Left cardiac atrium (tissue), 4 donors: ENCODE measurements at regions of chr10 and their contacts with region 1.

Region 1: GRCh38 chr10:4849555-4850242 is 23.7 kb downstream of the AKR1E2 start:
- DNase-seq: peak; percentile 92
- ATAC-seq: peak; percentile 88 to 92

Region 2: DNA sequence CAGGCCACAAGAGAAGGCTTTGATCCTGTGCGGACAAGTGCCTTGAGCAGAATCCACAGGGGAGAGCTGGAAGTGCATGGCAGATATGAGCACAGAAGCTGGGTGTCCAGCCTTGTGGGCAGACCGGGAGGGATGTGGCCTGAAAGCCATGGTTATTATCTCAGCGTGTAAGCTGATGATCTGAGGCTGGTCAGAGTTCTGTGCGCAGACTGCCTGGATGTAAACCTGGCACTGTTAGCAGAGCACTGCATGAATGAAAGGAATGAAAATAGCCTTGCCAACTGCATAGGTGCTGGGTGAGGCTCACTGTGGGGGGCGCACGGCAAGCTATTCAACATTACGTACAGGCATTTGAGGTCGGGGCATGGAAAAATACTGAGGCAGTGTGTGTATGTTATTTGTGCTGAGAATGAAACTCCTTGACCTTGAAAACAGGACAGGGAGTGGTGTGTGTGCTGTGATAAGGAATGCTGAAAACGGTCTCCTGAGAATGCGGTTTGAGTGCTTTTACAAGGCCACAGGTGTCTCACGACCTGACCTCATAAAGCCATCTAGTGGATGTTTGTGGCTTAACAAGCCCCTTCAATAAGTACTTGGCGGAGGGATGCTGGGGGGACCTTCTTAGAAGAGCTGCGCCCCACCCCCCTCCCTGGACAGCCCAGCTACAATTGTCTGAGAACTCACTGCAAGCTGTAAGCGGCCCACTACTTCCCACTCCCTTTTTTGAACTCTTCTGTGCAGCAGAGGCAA is 132.2 kb after region 1 on chr10:
- intact Hi-C with region 1: loop called in 1 of 2 experiments (anchors 10 kb)
- DNase-seq: peak; percentile 33
- ATAC-seq: peak; percentile 25 to 64

Region 3: GRCh38 chr10:5094265-5095205 is 244.8 kb after region 1 on chr10 and contains the start of gene AKR1C3:
- intact Hi-C with region 1: loop called (anchors 2 to 5 kb)
- DNase-seq: no peak
- ATAC-seq: peak; percentile 93
- total RNA-seq, gene AKR1C3: 60.2 to 91.3 TPM

Region 4: DNA sequence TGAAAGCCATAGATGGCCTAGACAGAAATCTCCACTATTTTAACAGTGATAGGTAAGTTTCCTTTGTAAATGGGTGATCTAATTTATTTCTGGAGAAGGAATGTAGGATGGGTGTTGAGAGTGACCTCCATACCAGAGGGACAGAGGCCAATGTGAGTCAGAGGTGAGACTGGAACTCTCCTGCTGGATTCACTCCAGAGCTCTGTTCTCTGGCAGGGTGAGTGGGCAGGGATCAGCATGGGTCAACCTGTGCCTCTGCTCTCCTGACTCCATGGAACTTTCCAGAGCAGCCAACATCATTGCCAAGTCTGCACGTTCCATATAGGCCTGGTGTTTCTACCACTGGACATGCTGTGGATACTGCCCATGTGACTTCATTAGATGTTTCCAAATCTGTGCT is 255.9 kb after region 1 on chr10:
- intact Hi-C with region 1: no loop called
- DNase-seq: no peak
- ATAC-seq: peak in 1 of 2 donors; percentile 55

Region 5: DNA sequence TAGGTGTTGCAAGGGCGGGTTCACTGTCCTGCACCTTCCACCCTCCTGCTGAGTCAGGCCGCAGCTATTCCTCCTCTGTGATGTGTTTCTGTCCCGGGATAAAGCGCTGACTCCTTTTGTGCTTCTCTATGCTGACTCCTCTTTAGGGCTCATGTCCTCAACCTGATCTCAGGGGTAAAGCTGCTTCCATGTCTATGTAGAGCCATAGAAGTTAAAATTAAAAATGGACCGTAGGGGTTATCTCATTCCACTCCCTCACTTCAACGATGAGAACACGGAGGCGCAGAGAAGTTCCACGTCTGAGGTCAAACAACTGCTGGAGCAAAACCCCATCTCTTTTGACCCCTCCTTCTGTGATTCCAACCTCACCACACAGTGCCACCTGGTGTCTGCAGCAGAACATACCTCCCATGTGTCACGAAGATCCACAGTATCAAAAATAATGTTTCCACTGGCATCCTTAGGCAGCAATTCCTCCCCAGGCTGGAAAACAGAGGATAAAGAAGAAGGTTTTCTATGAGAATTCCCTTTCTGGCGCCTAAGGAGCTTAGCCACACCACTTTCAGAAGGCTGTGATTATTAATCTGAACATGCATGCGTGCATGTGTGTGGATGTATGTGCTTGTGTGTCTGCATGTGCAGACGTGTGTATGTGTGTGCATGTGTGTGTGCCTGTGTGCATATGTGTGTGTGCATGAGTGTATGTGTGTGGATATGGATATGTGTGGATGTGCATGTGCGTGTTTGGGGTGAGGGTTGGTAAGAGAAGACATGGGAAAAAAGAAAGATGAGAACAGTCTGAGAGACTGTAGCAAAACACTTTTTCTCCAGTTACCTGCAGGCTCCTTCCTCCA is 433.8 kb after region 1 on chr10:
- intact Hi-C with region 1: loop called (anchors 1 to 10 kb)
- DNase-seq: peak; percentile 63
- ATAC-seq: peak; percentile 86 to 95

Region 6: GRCh38 chr10:5314840-5315239 is 465.1 kb after region 1 on chr10:
- intact Hi-C with region 1: no loop called
- DNase-seq: no peak
- ATAC-seq: no peak

Region 7: GRCh38 chr10:5381187-5381586 is 531.5 kb after region 1 on chr10:
- intact Hi-C with region 1: loop called in 1 of 2 experiments (anchors 5 kb)
- DNase-seq: no peak
- ATAC-seq: no peak

Region 8: DNA sequence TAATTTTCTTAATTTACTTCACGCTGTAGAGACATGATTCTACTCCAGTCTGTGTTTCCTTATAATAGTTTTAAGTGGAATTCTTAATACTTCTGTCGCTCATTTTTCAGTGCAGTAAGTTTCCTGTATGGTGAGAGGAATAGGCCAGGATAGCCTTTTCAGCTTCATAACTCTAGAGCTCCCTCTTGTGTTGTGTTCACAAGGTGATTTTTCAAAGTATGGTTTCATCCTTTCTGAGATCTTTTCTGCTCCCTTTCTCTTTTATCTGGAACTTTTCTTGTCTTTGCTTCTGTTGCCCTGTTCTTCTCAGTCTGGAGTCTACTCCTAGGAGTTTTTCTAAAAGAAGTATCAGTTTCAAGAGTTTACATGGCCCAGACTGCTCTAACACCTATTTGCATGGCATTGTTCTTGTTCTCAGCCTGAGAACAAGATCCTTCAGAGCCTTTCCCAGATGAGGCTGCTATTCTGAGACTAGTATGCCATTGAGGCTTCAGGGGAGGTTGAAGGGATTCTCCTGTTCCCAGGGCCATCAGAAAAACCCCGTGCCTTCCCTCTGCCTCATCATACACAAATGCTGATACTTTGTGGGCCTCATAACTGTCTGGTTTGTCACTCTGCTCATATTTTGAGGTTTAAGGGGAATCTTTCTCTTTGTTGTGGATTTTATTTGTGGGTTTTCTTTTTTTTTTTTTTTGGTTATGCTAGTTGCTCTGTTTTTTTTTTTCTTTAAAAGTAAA is 584.5 kb after region 1 on chr10:
- intact Hi-C with region 1: loop called in 1 of 2 experiments (anchors 5 kb)
- DNase-seq: no peak
- ATAC-seq: peak in 1 of 2 donors; percentile 47